Ovary (tissue), 10 donors: ENCODE measurements at regions of chr4 and their contacts with region 1.

Region 1: DNA sequence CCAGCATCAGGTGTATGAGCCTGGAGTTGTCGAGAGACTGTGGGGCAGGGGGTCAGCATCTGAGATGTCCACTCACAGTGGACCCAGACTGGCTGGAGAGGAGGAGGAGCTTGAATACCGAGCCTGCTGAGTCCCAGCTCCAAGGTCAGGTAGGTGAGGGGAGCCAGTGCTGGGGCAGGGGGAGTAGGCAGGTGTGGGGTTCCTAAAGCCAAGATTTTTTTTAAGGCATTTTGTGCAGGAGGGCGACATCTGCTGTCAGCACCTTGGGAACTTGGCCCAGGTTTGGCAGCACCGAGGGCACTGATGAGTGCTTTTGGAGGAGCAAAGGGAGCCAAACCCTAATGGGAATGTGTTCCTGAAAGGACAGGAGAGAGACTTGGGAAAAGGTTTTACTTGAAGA is 64.2 kb upstream of the MSANTD1 start:
- DNase-seq: no peak
- H3K4me3 ChIP-seq: no peak overlapping the region
- H3K27ac ChIP-seq: no peak overlapping the region
- H3K4me1 ChIP-seq: no peaks in the 10 kb centered on the region
- H3K27me3 ChIP-seq: no peaks in the 10 kb centered on the region
- CTCF ChIP-seq: no peak
- EP300 ChIP-seq: no peak
- POLR2A ChIP-seq: no peak

Region 2: DNA sequence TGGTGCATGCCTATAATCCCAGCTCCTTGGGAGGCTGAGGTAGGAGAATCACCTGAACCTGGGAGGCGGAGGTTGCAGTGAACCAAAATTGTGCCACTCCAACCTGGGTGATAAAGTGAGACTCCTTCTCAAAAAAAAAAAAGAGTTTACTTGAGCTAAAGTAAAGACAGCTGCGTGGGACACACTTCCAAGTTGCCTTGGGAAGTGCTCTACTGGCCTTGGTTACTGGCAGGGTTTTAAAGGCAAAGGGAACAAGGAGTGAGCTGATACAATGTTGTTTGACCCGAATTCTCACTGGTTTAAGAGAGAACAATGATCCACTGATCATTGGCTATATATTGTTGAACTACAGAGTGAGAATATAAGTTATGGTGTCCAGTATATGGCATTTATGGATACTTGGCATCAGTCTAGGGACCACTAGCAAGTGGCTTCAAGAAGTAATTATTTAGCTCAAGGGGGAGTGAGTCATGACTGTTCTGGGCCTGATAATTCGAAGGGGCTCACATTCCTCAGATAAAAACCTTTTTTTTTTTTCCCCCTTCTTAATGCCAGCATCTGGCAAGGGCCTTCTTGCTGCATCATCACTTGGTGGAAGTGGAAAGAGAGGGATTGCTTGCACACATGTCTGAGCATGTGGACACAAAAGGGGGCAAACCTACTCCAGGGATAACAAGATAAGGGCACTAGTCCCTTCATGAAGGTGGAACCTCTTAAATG is 189.0 kb before region 1 on chr4:
- intact Hi-C with region 1: no loop called
- DNase-seq: no peak
- H3K4me3 ChIP-seq: no peak overlapping the region
- H3K27ac ChIP-seq: no peak overlapping the region
- H3K4me1 ChIP-seq: no peaks in the 10 kb centered on the region
- H3K27me3 ChIP-seq: no peaks in the 10 kb centered on the region
- CTCF ChIP-seq: no peak
- EP300 ChIP-seq: no peak
- POLR2A ChIP-seq: no peak

Region 3: GRCh38 chr4:4241441-4241840 is 1056.7 kb after region 1 on chr4:
- intact Hi-C with region 1: loop called in 1 of 4 experiments (anchors 5 kb)
- DNase-seq: no peak
- H3K4me3 ChIP-seq: no peak overlapping the region
- H3K27ac ChIP-seq: no peak overlapping the region
- H3K4me1 ChIP-seq: no peaks in the 10 kb centered on the region
- H3K27me3 ChIP-seq: no peaks in the 10 kb centered on the region
- CTCF ChIP-seq: no peak
- EP300 ChIP-seq: no peak
- POLR2A ChIP-seq: no peak